ENCODE measurements at regions of chr9 and their contacts with region 1.

Region 1: GRCh38 chr9:131125128-131126058 is at the start of gene NUP214:
- DNase-seq: peak; percentile 98 to 100 (median 99)
- ATAC-seq: peak; percentile 99
- H3K4me3 ChIP-seq: peak within 1 kb of the TSS; percentile 96
- H3K4me3 Mint-ChIP-seq: peak within 1 kb of the TSS; percentile 93 to 100 (median 99)
- H3K27ac ChIP-seq: peak within 1 kb of the TSS; percentile 88
- H3K27ac Mint-ChIP-seq: peak within 1 kb of the TSS; percentile 98 to 99 (median 99)
- H3K4me1 ChIP-seq: peaks cover 12 to 14% of the 10 kb centered on the region in 2 donors
- H3K4me1 Mint-ChIP-seq: peaks cover 12 to 45% (median 32%) of the 10 kb centered on the region in 7 donors
- H3K27me3 ChIP-seq: no peaks in the 10 kb centered on the region
- H3K27me3 Mint-ChIP-seq: peaks cover 0 to 5% (median 0%) of the 10 kb centered on the region in 5 donors
- total RNA-seq, gene NUP214: 74.9 to 116 (median 82.6) TPM

Region 2: GRCh38 chr9:130712564-130713285 is 412.7 kb before region 1 on chr9:
- CTCF ChIA-PET with region 1: no interaction called
- POLR2A ChIA-PET with region 1: no interaction called
- intact Hi-C with region 1: loop called in 1 of 2 experiments (anchors 1 kb)
- DNase-seq: peak; percentile 92 to 97 (median 96)
- ATAC-seq: peak; percentile 98
- H3K4me3 ChIP-seq: peak overlapping the region; percentile 92
- H3K4me3 Mint-ChIP-seq: peak overlapping the region; percentile 90 to 99 (median 94)
- H3K27ac ChIP-seq: peak overlapping the region; percentile 99
- H3K27ac Mint-ChIP-seq: peak overlapping the region; percentile 91 to 97 (median 96)
- H3K4me1 ChIP-seq: peaks cover 22 to 31% of the 10 kb centered on the region in 2 donors
- H3K4me1 Mint-ChIP-seq: peaks cover 27 to 48% (median 37%) of the 10 kb centered on the region in 7 donors
- H3K27me3 ChIP-seq: no peaks in the 10 kb centered on the region
- H3K27me3 Mint-ChIP-seq: no peaks in the 10 kb centered on the region

Region 3: DNA sequence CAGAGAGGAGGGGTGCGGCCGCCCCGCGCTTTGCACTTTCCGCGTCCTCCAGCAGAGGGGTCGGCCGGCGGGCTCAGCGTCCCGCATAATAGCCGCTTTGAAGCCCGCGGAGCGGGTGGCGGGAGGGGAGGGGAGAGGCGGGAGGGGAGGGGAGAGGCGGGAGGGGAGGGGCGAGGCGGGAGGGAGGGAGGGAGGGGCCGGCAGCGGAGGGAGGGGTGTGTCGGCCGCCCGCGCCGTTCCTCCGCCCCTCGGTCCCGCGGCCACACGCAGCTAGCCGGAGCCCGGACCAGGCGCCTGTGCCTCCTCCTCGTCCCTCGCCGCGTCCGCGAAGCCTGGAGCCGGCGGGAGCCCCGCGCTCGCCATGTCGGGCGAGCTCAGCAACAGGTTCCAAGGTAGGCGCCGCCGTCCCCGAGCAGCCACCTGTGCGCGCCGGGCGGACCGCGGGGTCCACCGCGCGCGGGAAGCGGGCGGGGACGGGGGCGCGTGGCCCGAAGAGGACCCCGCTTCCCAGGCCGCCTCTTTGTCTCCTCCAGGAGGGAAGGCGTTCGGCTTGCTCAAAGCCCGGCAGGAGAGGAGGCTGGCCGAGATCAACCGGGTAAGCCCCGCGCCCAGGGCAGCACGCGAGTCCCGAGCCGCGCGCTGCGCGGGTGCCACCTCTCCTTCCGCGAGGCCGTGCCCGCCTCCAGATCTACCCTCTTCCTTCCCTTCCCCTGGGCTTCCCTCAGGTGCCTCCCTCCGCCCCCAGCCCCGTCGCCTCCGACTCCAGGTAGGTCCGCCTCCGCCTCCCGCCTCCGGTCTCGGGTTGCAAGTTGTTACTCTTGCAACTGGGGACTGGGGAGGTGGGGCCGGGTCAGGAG is 28.9 kb before region 1 on chr9 and contains the start of gene AIF1L:
- CTCF ChIA-PET with region 1: no interaction called
- POLR2A ChIA-PET with region 1: no interaction called
- intact Hi-C with region 1: loop called in 1 of 2 experiments (anchors 1 kb)
- DNase-seq: peak in 2 of 9 donors; percentile 7 to 11
- ATAC-seq: peak; percentile 42
- H3K4me3 ChIP-seq: no peak within 1 kb of the TSS
- H3K4me3 Mint-ChIP-seq: peak within 1 kb of the TSS; percentile 59 to 82 (median 72)
- H3K27ac ChIP-seq: no peak within 1 kb of the TSS
- H3K27ac Mint-ChIP-seq: no peak within 1 kb of the TSS
- H3K4me1 ChIP-seq: no peaks in the 10 kb centered on the region
- H3K4me1 Mint-ChIP-seq: peaks cover 3 to 12% (median 10%) of the 10 kb centered on the region in 7 donors
- H3K27me3 ChIP-seq: peaks cover 0 to 6% of the 10 kb centered on the region in 2 donors
- H3K27me3 Mint-ChIP-seq: peaks cover 24 to 39% (median 28%) of the 10 kb centered on the region in 5 donors
- total RNA-seq, gene AIF1L: 0.17 to 0.44 (median 0.29) TPM in 4 of 5 experiments, not detected in the other

Region 4: GRCh38 chr9:131287359-131287758 is 162.0 kb after region 1 on chr9:
- CTCF ChIA-PET with region 1: no interaction called
- POLR2A ChIA-PET with region 1: no interaction called
- intact Hi-C with region 1: no loop called
- DNase-seq: no peak
- ATAC-seq: no peak
- H3K4me3 ChIP-seq: no peak overlapping the region
- H3K4me3 Mint-ChIP-seq: no peak overlapping the region
- H3K27ac ChIP-seq: no peak overlapping the region
- H3K27ac Mint-ChIP-seq: no peak overlapping the region
- H3K4me1 ChIP-seq: peaks cover 1 to 2% of the 10 kb centered on the region in 2 donors
- H3K4me1 Mint-ChIP-seq: peaks cover 2 to 8% (median 2%) of the 10 kb centered on the region in 7 donors
- H3K27me3 ChIP-seq: no peaks in the 10 kb centered on the region
- H3K27me3 Mint-ChIP-seq: peaks cover 0 to 22% (median 0%) of the 10 kb centered on the region in 5 donors

Region 5: DNA sequence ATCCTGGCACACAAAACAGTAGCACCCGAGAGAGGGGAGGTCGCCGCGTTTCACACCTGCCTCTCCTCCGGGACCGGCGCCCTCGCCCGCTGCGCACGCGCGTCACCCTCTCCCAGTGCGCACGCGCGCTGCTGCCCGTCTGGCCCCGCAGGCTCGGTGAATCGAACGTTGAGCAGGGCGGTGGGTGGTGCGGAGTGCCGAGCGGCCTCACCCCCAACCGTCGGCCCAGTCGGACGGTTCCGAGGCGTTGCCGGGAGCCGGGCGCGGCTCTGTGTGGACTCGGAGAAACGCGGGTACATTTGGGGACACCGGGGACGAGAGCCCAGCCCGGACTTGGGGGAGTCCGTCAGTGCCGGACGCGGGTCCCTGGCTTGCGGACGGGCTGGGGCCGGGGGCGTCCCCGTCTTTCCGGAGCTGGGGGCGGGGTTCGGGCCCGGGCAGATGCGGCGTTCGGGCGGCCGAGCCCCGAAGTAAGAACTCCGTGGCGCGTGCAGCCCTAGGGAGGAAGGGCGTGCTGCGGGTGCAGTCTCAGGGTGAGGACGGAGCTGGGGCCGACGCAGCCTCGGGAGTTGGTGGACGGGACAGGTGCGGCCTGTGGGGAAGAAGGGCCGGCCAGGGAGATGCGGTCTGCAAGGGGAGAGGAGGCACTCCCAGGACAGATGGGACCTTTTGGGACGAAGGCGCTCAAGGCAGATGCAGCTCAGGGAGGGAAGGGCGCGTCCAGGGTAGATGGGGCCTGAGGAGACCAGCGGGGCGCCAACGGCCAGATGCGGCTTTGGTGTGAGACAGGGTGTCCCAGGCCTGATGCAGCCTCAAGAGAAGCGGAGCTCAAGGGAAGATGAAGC is 377.6 kb after region 1 on chr9 and contains the start of gene POMT1:
- CTCF ChIA-PET with region 1: no interaction called
- POLR2A ChIA-PET with region 1: no interaction called
- intact Hi-C with region 1: loop called (anchors 1 kb)
- DNase-seq: peak; percentile 85 to 93 (median 90)
- ATAC-seq: peak; percentile 77
- H3K4me3 ChIP-seq: peak within 1 kb of the TSS; percentile 79
- H3K4me3 Mint-ChIP-seq: peak within 1 kb of the TSS; percentile 89 to 99 (median 94)
- H3K27ac ChIP-seq: peak within 1 kb of the TSS; percentile 88
- H3K27ac Mint-ChIP-seq: peak within 1 kb of the TSS; percentile 88 to 98 (median 93)
- H3K4me1 ChIP-seq: peaks cover 41 to 42% of the 10 kb centered on the region in 2 donors
- H3K4me1 Mint-ChIP-seq: peaks cover 51 to 73% (median 60%) of the 10 kb centered on the region in 7 donors
- H3K27me3 ChIP-seq: no peaks in the 10 kb centered on the region
- H3K27me3 Mint-ChIP-seq: no peaks in the 10 kb centered on the region
- total RNA-seq, gene POMT1: 40.0 to 55.8 (median 47.7) TPM

Region 6: GRCh38 chr9:131635285-131635684 is 509.9 kb after region 1 on chr9:
- CTCF ChIA-PET with region 1: no interaction called
- POLR2A ChIA-PET with region 1: no interaction called
- intact Hi-C with region 1: loop called in 1 of 2 experiments (anchors 1 kb)
- DNase-seq: peak; percentile 34 to 76 (median 60)
- ATAC-seq: peak; percentile 98
- H3K4me3 ChIP-seq: no peak overlapping the region
- H3K4me3 Mint-ChIP-seq: peak overlapping the region in 3 of 10 donors; percentile 5 to 50 (median 11)
- H3K27ac ChIP-seq: peak overlapping the region; percentile 36
- H3K27ac Mint-ChIP-seq: peak overlapping the region; percentile 70 to 89 (median 85)
- H3K4me1 ChIP-seq: peaks cover 12 to 20% of the 10 kb centered on the region in 2 donors
- H3K4me1 Mint-ChIP-seq: peaks cover 15 to 51% (median 19%) of the 10 kb centered on the region in 7 donors
- H3K27me3 ChIP-seq: no peaks in the 10 kb centered on the region
- H3K27me3 Mint-ChIP-seq: no peaks in the 10 kb centered on the region

Region 7: GRCh38 chr9:132079391-132080091 is 954.1 kb after region 1 on chr9 and contains the start of gene MED27:
- CTCF ChIA-PET with region 1: no interaction called
- POLR2A ChIA-PET with region 1: interaction called, 5 read pairs
- intact Hi-C with region 1: loop called in 1 of 2 experiments (anchors 10 kb)
- DNase-seq: peak; percentile 79 to 94 (median 90)
- ATAC-seq: peak; percentile 98
- H3K4me3 ChIP-seq: peak within 1 kb of the TSS; percentile 77
- H3K4me3 Mint-ChIP-seq: peak within 1 kb of the TSS; percentile 93 to 99 (median 98)
- H3K27ac ChIP-seq: peak within 1 kb of the TSS; percentile 72
- H3K27ac Mint-ChIP-seq: peak within 1 kb of the TSS; percentile 69 to 96 (median 92)
- H3K4me1 ChIP-seq: peaks cover 13 to 15% of the 10 kb centered on the region in 2 donors
- H3K4me1 Mint-ChIP-seq: peaks cover 31 to 53% (median 49%) of the 10 kb centered on the region in 7 donors
- H3K27me3 ChIP-seq: no peaks in the 10 kb centered on the region
- H3K27me3 Mint-ChIP-seq: peaks cover 0 to 7% (median 4%) of the 10 kb centered on the region in 5 donors
- total RNA-seq, gene MED27: 11.5 to 26.9 (median 21.3) TPM

Region 8: DNA sequence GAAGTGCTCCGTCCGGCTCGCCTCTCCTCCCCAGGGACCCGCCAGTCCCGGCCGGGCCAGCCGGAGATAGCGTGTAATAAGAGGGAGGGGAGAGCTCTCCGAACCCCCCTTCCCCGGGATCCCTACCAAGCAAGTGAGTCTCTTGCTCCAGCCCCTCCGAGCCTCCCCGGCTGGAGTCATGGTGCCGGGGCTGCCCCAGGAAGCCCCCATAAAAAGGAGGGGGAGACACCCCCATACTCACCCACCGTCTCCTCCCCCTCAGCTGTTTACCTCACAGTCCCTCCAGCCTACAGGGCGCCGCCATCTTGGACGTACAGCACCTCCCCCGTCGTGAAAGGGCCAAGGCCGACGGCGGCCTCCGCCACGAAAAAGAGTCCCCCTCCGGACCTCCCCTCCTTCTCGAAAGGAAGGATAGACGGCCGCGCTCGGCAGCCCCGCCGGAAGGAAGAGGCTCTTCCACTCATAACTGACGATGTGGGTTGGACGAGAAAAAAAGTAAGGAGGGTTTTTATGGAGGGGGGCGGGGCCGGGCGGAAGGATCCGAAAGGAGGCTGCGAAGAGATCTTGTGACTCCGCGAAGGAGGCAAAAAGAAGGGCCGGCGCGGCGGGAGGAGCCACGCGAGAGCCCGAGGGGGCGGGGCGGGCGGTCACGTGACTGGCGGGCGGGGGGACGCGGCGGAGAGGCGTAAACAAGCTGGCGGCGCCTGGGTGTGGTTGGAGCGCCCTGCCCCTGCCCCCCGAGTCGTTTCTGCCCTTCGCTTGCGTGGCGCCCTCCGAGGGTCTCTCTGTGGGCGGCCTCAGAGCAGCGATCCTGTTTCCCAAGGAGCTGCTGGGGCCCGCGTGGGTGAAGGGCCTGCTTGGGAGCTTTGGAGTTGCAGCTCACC is 1819.2 kb after region 1 on chr9 and contains the start of gene TSC1:
- CTCF ChIA-PET with region 1: no interaction called
- POLR2A ChIA-PET with region 1: no interaction called
- intact Hi-C with region 1: loop called in 1 of 2 experiments (anchors 10 kb)
- DNase-seq: peak; percentile 96 to 99 (median 98)
- ATAC-seq: peak; percentile 94
- H3K4me3 ChIP-seq: peak within 1 kb of the TSS; percentile 93
- H3K4me3 Mint-ChIP-seq: peak within 1 kb of the TSS; percentile 90 to 99 (median 98)
- H3K27ac ChIP-seq: peak within 1 kb of the TSS; percentile 94
- H3K27ac Mint-ChIP-seq: peak within 1 kb of the TSS; percentile 99 to 100 (median 100)
- H3K4me1 ChIP-seq: peaks cover 8 to 14% of the 10 kb centered on the region in 2 donors
- H3K4me1 Mint-ChIP-seq: peaks cover 15 to 45% (median 27%) of the 10 kb centered on the region in 7 donors
- H3K27me3 ChIP-seq: no peaks in the 10 kb centered on the region
- H3K27me3 Mint-ChIP-seq: peaks cover 0 to 3% (median 0%) of the 10 kb centered on the region in 5 donors
- total RNA-seq, gene TSC1: 38.1 to 98.3 (median 59.6) TPM

Measured in naive thymus-derived CD4-positive, alpha-beta T cell (primary cell).